Cardiac septum (tissue), 1 donor: ENCODE measurements at regions of chr5 and their contacts with region 1.

Region 1: GRCh38 chr5:122896598-122897282 is 51.3 kb downstream of the SNX24 start:
- DNase-seq: no peak

Region 2: DNA sequence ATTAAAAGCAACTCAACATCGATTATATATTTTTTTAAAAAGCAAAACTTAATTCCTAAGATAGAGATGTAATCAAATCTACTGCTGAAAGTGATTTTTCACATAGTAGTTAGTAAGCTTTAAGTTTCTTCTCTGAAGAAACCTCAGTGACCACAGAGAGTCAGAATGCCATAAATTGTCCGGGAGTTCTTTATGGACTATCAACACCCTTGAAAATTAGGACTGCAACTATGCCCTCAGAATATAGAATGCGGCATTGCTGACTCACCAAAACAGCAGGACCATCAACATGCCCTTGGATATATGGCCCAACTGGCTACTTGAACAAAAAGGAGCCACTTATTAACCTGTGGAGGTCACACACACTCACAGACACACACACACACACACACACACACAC is 350.8 kb before region 1 on chr5:
- intact Hi-C with region 1: no loop called
- DNase-seq: no peak

Region 3: GRCh38 chr5:122996091-122996490 is 99.4 kb after region 1 on chr5:
- intact Hi-C with region 1: no loop called
- DNase-seq: no peak

Region 4: GRCh38 chr5:123344816-123345426 is 448.2 kb after region 1 on chr5:
- intact Hi-C with region 1: loop called (anchors 10 kb)
- DNase-seq: no peak